GM10248 (cell line): ENCODE measurements at regions of chr12 and their contacts with region 1.

Region 1: GRCh38 chr12:6867413-6868210 is at the start of gene TPI1:
- DNase-seq: peak; percentile 96
- CTCF ChIP-seq: no peak

Region 2: GRCh38 chr12:6688999-6689882 is 178.4 kb before region 1 on chr12 and contains the start of gene ZNF384:
- CTCF ChIA-PET with region 1: interaction called, 5 read pairs
- POLR2A ChIA-PET with region 1: interaction called, 15 read pairs
- DNase-seq: peak; percentile 96
- CTCF ChIP-seq: peak; percentile 2

Region 3: DNA sequence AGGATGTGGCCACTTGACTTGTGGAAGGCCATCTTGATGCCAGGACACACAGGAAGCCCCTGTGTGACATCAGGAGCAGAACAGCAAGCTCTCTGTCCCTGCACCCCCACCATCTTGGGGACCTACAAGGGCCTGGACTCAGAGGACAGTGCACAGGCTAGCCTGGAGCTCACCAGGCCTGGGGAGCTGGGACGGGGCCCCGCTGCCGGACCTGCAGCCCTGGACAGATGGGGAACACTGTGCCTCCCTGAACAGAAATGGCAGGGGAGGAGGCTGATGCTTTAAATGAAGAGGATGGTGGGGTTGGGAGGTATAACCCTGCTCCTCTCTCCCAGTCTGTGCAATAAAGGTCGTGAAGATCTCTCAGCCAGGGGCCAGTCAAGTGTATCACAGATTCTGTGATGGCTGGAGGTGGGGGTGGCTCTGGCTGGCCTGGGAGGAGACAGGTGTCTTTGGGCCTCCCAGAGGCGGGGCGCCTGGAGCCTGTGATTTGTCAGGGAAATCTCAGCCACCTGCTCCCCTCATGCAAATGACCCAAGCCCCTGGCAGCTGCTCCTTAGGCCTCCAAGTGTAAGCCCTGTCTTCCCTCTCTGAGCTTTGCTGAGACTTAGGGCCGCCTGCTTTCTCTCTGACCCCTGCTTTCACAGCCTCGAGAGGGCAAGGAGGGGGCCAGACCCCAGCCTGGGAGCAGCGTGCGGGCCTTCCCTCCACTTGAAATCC is 28.0 kb before region 1 on chr12:
- CTCF ChIA-PET with region 1: interaction called, 8 read pairs
- POLR2A ChIA-PET with region 1: interaction called, 14 read pairs
- DNase-seq: peak; percentile 78
- CTCF ChIP-seq: no peak

Region 4: DNA sequence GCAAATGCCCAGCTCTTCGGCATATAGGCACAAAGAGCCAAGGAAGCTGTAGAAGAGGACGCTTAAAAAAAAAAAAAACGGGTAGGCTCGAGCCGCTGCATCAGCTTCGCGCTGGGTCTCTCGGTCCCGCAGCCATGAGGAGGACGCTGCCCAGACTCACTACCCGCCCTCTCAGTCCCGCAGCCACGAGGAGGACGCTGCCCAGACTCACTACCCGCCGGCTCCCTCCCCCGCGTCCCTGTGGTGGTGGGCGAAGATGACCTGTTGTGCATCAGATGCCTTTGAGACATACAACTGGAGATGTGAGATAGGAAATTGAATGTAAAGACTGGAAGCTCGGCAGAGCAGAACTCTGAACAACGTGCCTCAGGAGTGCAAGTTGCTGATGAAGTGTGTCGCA is 16.9 kb after region 1 on chr12:
- CTCF ChIA-PET with region 1: interaction called, 45 read pairs
- POLR2A ChIA-PET with region 1: interaction called, 10 read pairs
- DNase-seq: no peak
- CTCF ChIP-seq: no peak

Region 5: DNA sequence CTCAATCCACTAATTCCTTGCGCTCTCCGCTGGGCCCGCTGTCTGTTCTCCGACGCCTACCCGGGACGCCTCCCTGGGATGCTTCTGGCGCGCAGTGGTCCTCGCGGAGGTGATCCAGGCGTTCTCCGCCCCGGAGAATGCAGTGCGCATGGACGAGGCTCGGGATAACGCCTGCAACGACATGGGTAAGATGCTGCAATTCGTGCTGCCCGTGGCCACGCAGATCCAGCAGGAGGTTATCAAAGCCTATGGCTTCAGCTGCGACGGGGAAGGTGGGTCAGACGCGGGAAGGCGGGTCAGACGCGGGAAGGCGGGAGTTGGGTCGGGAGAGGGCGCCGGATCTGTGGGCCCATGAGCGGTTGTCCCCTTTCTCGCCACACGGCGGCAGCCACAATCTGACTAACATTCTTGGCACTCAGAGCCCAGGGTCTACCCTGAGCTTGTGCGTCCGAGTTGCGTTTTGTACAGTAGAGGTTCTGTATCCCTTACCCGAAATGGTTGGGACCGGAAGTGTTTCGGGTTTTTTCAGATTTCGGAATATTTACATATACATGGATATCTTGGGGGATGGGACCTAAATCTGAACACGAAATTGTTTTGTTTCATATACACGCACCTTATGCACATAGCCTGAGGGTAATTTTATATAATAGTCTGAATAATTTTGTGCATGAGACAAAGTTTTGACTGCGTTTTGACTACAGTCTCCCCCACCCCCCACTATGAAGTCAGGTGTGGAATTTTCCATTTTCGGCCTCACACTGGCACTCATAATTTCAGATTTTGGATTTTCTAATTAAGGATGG is 77.0 kb after region 1 on chr12:
- CTCF ChIA-PET with region 1: interaction called, 13 read pairs
- POLR2A ChIA-PET with region 1: interaction called, 17 read pairs
- DNase-seq: peak; percentile 79
- CTCF ChIP-seq: peak; percentile 94

Region 6: GRCh38 chr12:6965026-6965661 is 97.5 kb after region 1 on chr12:
- CTCF ChIA-PET with region 1: interaction called, 24 read pairs
- POLR2A ChIA-PET with region 1: interaction called, 3 read pairs
- DNase-seq: peak; percentile 84
- CTCF ChIP-seq: peak; percentile 98